ENCODE measurements at regions of chr1 and their contacts with region 1.

Region 1: GRCh38 chr1:211571998-211572397 is 7.0 kb downstream of the SLC30A1 start:
- DNase-seq: no peak
- H3K4me3 Mint-ChIP-seq: no peak overlapping the region
- H3K27ac Mint-ChIP-seq: no peak overlapping the region
- H3K4me1 Mint-ChIP-seq: peaks cover 35% of the 10 kb centered on the region
- H3K27me3 Mint-ChIP-seq: no peaks in the 10 kb centered on the region

Region 2: GRCh38 chr1:211654838-211655787 is 83.1 kb after region 1 on chr1:
- CTCF ChIA-PET with region 1: interaction called, 11 read pairs
- POLR2A ChIA-PET with region 1: no interaction called
- DNase-seq: peak; percentile 83
- H3K4me3 Mint-ChIP-seq: no peak overlapping the region
- H3K27ac Mint-ChIP-seq: no peak overlapping the region
- H3K4me1 Mint-ChIP-seq: peaks cover 5% of the 10 kb centered on the region
- H3K27me3 Mint-ChIP-seq: no peaks in the 10 kb centered on the region

Measured in activated CD4-positive, alpha-beta memory T cell treated with anti-CD3 and anti-CD28 coated beads, Interleukin-2, amount 10 ng/mL, durations not matched to agents 7 days and 5 days (primary cell).